T-cell (primary cell): ENCODE measurements at regions of chrX and their contacts with region 1.

Region 1: DNA sequence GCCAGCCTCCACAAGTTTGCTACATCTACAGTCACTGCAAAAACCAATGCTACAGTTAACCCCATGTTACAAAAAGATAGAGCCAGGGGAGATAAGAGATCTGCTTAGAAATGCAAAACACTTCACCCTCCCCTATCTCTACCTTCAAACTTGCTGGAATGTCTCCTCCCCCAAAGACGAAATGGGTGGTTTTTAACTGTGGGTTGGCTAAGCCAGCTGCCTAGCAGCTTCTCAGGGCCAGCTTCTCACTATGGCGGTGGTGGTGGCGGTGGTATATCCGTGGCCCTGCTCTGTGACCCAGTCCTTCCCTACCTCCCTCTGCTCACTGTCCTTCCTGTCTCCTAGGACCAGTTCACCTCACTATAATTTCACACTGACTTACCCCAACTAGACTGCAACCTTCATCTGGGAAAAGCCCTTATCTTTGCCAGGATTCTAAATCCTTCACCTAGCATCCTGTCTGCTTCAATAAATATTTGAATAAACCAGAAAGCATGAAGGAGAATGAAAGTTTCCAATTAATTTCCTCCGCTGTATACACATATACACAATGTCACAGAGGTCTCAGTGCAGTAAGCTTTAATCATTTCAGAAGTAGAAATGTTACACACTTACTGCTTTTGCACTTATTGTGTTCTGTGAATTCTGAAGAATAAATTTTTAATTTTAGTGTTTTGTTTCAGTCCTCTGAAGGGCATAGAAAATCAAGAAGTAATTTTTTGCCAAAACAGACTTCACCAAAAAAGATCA is 46.3 kb downstream of the SH3KBP1 start:
- DNase-seq: peak in 24 of 35 experiments; percentile 7 to 70 (median 28)
- ATAC-seq: peak; percentile 53 to 77 (median 63)
- H3K4me3 ChIP-seq: no peak overlapping the region
- H3K4me3 Mint-ChIP-seq: peak overlapping the region; percentile 43 to 69 (median 62)
- H3K27ac ChIP-seq: peak overlapping the region; percentile 56
- H3K27ac Mint-ChIP-seq: peak overlapping the region; percentile 87 to 91
- H3K4me1 ChIP-seq: peaks cover 19 to 56% of the 10 kb centered on the region in 2 experiments
- H3K4me1 Mint-ChIP-seq: peaks cover 52 to 70% (median 55%) of the 10 kb centered on the region in 3 donors
- H3K27me3 ChIP-seq: no peaks in the 10 kb centered on the region
- H3K27me3 Mint-ChIP-seq: no peaks in the 10 kb centered on the region

Region 2: DNA sequence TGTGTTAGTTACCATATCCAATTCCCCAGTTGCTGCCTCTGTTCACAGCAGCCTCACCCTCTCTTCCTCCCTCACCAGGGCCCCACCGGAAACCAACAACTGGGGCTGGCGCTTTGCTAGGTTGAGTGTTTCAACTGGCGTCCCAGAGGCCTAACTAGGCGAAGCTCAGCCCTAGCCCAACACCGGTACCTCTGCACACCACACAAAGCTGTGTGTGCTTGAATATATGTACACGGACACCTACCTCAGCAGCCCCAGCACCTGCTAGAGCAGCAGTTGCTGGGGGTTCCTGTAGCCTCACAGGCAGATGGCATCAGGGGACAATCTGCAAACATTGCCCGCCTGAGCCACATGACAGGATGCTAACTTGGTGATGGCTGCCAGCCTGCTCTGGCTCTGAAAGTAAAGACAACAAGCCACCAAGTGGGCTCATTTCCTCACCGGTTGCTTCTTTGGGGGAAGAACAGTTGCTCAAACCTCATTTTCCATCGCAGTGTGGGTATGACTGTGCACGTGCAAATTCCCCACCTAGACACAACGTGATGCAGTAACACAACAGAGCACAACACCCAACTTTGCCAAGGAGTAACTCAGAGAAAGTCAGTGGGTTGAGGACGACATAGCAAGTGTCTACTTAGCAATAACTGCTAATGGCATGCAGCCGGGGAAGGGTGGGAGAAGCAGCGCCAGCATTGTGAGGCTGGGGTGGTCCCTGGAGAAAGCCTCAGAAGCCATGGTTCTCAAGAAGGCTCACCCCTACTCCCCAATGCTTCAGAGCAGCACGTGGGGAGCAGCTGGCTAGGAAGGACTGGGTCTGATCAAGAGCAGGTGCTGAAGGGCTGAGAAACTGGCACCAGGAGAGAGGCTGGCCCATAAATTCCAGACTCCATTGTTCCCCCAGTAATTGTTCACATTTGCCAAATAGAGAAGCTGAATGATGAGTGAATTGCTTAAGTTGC is 93.1 kb before region 1 on chrX:
- CTCF ChIA-PET with region 1: interaction called in 1 of 2 experiments, 16 read pairs
- POLR2A ChIA-PET with region 1: interaction called, 3 read pairs
- DNase-seq: peak; percentile 62 to 90 (median 78)
- ATAC-seq: peak; percentile 85 to 91 (median 88)
- H3K4me3 ChIP-seq: no peak overlapping the region
- H3K4me3 Mint-ChIP-seq: peak overlapping the region; percentile 15 to 66 (median 26)
- H3K27ac ChIP-seq: peak overlapping the region; percentile 94
- H3K27ac Mint-ChIP-seq: peak overlapping the region; percentile 98 to 99
- H3K4me1 ChIP-seq: peaks cover 56 to 91% of the 10 kb centered on the region in 2 experiments
- H3K4me1 Mint-ChIP-seq: peaks cover 81 to 98% (median 95%) of the 10 kb centered on the region in 3 donors
- H3K27me3 ChIP-seq: no peaks in the 10 kb centered on the region
- H3K27me3 Mint-ChIP-seq: no peaks in the 10 kb centered on the region

Region 3: GRCh38 chrX:19772826-19773628 is 68.0 kb before region 1 on chrX:
- CTCF ChIA-PET with region 1: interaction called, 4 to 10 read pairs
- POLR2A ChIA-PET with region 1: interaction called in 1 of 2 experiments, 5 read pairs
- DNase-seq: no peak
- ATAC-seq: peak; percentile 29 to 62 (median 47)
- H3K4me3 ChIP-seq: no peak overlapping the region
- H3K4me3 Mint-ChIP-seq: peak overlapping the region; percentile 39 to 63 (median 60)
- H3K27ac ChIP-seq: peak overlapping the region; percentile 64
- H3K27ac Mint-ChIP-seq: peak overlapping the region; percentile 90 to 92
- H3K4me1 ChIP-seq: peaks cover 23 to 64% of the 10 kb centered on the region in 2 experiments
- H3K4me1 Mint-ChIP-seq: peaks cover 65 to 83% (median 71%) of the 10 kb centered on the region in 3 donors
- H3K27me3 ChIP-seq: no peaks in the 10 kb centered on the region
- H3K27me3 Mint-ChIP-seq: peaks cover 0 to 3% of the 10 kb centered on the region in 2 donors

Region 4: GRCh38 chrX:19805046-19805690 is 35.9 kb before region 1 on chrX:
- CTCF ChIA-PET with region 1: interaction called in 1 of 2 experiments, 12 read pairs
- POLR2A ChIA-PET with region 1: interaction called in 1 of 2 experiments, 3 read pairs
- DNase-seq: peak in 5 of 35 experiments; percentile 6 to 59 (median 15)
- ATAC-seq: peak; percentile 74 to 82 (median 77)
- H3K4me3 ChIP-seq: peak overlapping the region; percentile 7 to 35
- H3K4me3 Mint-ChIP-seq: peak overlapping the region; percentile 52 to 62 (median 59)
- H3K27ac ChIP-seq: peak overlapping the region; percentile 69
- H3K27ac Mint-ChIP-seq: peak overlapping the region; percentile 87 to 89
- H3K4me1 ChIP-seq: peaks cover 17 to 48% of the 10 kb centered on the region in 2 experiments
- H3K4me1 Mint-ChIP-seq: peaks cover 47 to 65% (median 48%) of the 10 kb centered on the region in 3 donors
- H3K27me3 ChIP-seq: no peaks in the 10 kb centered on the region
- H3K27me3 Mint-ChIP-seq: no peaks in the 10 kb centered on the region

Region 5: DNA sequence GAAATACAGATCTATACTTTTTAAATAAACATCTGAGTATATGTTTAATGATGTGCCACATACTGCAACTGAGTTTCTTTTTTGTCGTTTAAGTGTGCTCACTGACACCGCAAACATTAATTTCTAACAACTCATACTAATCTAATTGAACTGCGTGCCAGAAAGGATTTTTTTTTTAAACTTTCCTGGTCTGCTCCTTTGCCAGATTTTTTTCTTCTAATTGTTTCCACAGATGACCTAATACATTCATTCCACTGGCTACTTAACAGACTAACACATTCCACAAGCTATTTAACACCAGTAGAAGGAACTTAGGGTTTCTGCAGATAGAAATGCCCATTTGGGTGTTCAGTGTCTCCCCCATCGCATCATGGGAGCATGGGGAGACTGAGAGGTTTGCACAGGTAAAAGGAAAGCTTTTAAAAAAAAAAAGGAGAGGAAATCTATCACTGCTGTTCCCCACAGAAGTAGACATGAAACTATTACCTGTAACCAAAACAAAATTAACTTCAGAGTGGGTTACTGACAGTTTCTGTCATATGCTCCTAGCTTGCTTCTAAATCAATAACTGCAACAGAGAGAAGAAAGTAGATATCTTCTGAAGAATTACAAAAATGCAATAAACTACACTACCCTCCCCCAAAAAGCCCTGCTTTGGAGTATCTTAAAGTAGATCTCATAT is 14.8 kb after region 1 on chrX:
- CTCF ChIA-PET with region 1: no interaction called
- POLR2A ChIA-PET with region 1: interaction called, 7 to 10 read pairs
- DNase-seq: no peak
- ATAC-seq: peak in 1 of 4 experiments; percentile 19
- H3K4me3 ChIP-seq: no peak overlapping the region
- H3K4me3 Mint-ChIP-seq: peak overlapping the region; percentile 48 to 59 (median 55)
- H3K27ac ChIP-seq: peak overlapping the region; percentile 38
- H3K27ac Mint-ChIP-seq: peak overlapping the region; percentile 86 to 87
- H3K4me1 ChIP-seq: peaks cover 10 to 13% of the 10 kb centered on the region in 2 experiments
- H3K4me1 Mint-ChIP-seq: peaks cover 22 to 42% (median 28%) of the 10 kb centered on the region in 3 donors
- H3K27me3 ChIP-seq: no peaks in the 10 kb centered on the region
- H3K27me3 Mint-ChIP-seq: peaks cover 0 to 3% of the 10 kb centered on the region in 2 donors

Region 6: DNA sequence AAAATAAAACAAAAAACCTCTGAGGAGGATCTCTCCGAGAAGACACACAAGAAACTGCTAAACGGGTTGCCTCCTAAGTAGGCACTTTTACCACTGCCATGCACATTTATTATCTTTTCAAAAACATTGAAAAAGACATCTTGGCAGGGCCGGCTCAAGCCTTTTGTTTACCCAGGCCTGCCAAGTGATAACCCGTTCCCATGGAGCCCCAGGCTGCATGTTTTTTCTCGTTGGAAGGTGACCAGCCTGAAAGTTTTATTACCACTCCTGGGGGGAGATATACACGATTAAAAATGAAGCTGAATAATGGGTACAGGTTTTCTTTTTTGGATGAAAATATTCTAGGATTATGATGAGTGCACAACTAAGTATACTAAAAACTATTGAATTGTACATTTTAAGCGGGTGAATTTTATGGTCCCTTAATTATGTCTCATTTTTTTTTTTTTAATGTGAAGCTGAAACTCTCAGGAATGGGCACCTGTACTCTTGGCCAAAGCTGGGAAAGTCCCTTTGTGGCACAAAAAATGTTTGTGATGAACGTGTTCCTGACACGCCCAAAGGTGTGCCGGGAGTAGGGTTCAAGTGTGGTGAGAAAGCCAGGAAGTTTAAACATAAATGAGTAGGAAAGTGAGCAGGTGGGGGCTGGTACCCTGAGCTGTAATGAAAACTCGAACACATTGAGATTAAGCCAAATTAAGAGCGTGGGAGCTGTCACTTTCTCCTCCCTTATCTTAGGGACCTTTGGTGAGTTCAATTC is 277.2 kb after region 1 on chrX:
- CTCF ChIA-PET with region 1: no interaction called
- POLR2A ChIA-PET with region 1: interaction called in 1 of 2 experiments, 10 read pairs
- DNase-seq: no peak
- ATAC-seq: no peak
- H3K4me3 ChIP-seq: no peak overlapping the region
- H3K4me3 Mint-ChIP-seq: no peak overlapping the region
- H3K27ac ChIP-seq: no peak overlapping the region
- H3K27ac Mint-ChIP-seq: no peak overlapping the region
- H3K4me1 ChIP-seq: peaks cover 0 to 9% of the 10 kb centered on the region in 2 experiments
- H3K4me1 Mint-ChIP-seq: peaks cover 9 to 19% (median 9%) of the 10 kb centered on the region in 3 donors
- H3K27me3 ChIP-seq: peaks cover 3 to 21% of the 10 kb centered on the region in 2 experiments
- H3K27me3 Mint-ChIP-seq: peaks cover 13 to 19% of the 10 kb centered on the region in 2 donors